ENCODE measurements at regions of chr12 and their contacts with region 1.

Region 1: GRCh38 chr12:59046763-59047534 is 126.6 kb upstream of the LRIG3 start:
- DNase-seq: no peak
- ATAC-seq: no peak
- H3K4me3 ChIP-seq: no peak overlapping the region
- H3K27ac ChIP-seq: no peak overlapping the region
- H3K4me1 ChIP-seq: no peaks in the 10 kb centered on the region
- H3K27me3 ChIP-seq: no peaks in the 10 kb centered on the region
- CTCF ChIP-seq: no peak

Region 2: DNA sequence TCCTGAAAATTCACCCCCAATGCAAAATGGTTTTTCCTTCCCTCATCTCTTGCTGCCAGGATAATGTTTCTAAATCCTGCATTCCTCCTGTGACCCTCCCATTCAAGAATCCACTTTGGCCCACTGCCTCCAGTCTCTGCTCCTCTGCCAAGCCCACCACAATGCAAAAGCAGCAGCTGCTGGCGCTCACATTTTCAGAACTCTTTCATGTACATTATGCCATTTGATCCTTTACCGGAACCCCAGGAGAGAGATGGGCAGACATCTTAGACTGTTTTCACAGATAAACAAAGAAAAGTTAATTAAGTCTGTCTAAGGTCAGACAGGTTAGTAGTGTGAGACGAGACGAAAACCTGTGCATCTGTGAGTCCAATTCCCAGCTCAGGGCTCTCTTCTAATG is 139.6 kb before region 1 on chr12:
- CTCF ChIA-PET with region 1: no interaction called
- POLR2A ChIA-PET with region 1: no interaction called
- in situ Hi-C with region 1: no loop called
- intact Hi-C with region 1: no loop called
- DNase-seq: no peak
- ATAC-seq: no peak
- H3K4me3 ChIP-seq: no peak overlapping the region
- H3K27ac ChIP-seq: no peak overlapping the region
- H3K4me1 ChIP-seq: no peaks in the 10 kb centered on the region
- H3K27me3 ChIP-seq: no peaks in the 10 kb centered on the region
- CTCF ChIP-seq: no peak

Region 3: DNA sequence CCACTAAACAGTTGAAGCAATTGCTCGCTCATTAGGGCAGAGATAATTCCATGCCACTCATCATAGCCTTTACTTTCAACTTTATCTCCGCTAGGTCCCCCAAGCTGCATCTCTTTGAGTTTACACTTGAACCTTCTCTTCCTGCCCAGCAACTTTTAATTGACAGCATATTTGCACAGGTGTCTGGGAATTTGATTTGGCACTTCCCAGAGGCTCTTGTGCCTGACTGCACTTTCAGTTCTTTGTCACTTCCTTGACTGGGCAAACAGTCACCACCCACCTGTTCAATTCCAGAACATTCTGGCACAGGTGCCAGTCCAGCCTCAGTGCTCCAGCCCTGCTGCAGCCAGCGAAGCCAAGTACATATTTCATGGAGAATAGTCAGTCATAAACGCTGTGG is 16.6 kb before region 1 on chr12:
- CTCF ChIA-PET with region 1: no interaction called
- POLR2A ChIA-PET with region 1: interaction called, 13 read pairs
- in situ Hi-C with region 1: no loop called
- intact Hi-C with region 1: no loop called
- DNase-seq: no peak
- ATAC-seq: no peak
- H3K4me3 ChIP-seq: no peak overlapping the region
- H3K27ac ChIP-seq: no peak overlapping the region
- H3K4me1 ChIP-seq: no peaks in the 10 kb centered on the region
- H3K27me3 ChIP-seq: no peaks in the 10 kb centered on the region
- CTCF ChIP-seq: no peak

Region 4: GRCh38 chr12:59067083-59067482 is 20.1 kb after region 1 on chr12:
- CTCF ChIA-PET with region 1: no interaction called
- POLR2A ChIA-PET with region 1: no interaction called
- in situ Hi-C with region 1: no loop called
- intact Hi-C with region 1: no loop called
- DNase-seq: no peak
- ATAC-seq: no peak
- H3K4me3 ChIP-seq: no peak overlapping the region
- H3K27ac ChIP-seq: no peak overlapping the region
- H3K4me1 ChIP-seq: no peaks in the 10 kb centered on the region
- H3K27me3 ChIP-seq: no peaks in the 10 kb centered on the region
- CTCF ChIP-seq: no peak